Ascending aorta (tissue), 2 donors: ENCODE measurements at regions of chr12 and their contacts with region 1.

Region 1: DNA sequence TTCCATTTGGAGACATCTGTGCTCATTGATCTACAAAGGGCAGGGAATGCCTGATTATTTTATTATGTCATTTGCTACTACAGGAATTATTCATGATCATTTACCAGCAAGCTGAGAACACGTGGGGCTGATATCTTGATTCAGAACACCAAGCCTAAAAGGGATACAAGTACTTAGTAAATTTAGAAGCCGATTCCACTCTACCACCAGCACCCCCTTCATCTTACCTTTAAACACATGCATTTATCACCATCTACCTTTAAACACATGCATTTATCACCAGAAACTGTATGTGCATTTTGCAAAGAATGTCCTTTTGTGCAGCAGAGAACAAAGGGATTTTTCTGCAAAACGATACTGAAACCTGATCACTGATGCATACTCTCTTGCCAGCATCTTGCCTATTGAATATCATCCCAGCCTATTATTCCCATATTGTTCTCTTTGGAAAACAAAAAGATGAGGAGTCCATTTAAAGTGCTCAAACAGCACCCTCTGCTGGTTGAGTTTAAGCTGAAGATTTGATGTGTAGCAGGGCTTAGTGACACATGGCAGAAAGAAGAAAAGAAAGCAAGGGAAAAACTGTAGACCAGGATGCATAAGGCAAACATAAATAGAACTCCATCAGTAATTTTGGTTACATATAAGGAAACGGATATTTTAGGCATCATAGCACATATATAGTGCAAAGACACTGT is 132.6 kb upstream of the PLEKHG7 start:
- DNase-seq: peak in 1 of 2 donors; percentile 82
- H3K4me3 ChIP-seq: no peak overlapping the region
- H3K27ac ChIP-seq: no peak overlapping the region
- H3K4me1 ChIP-seq: no peaks in the 10 kb centered on the region
- H3K27me3 ChIP-seq: no peaks in the 10 kb centered on the region
- CTCF ChIP-seq: peak; percentile 51 to 87 (median 71)

Region 2: DNA sequence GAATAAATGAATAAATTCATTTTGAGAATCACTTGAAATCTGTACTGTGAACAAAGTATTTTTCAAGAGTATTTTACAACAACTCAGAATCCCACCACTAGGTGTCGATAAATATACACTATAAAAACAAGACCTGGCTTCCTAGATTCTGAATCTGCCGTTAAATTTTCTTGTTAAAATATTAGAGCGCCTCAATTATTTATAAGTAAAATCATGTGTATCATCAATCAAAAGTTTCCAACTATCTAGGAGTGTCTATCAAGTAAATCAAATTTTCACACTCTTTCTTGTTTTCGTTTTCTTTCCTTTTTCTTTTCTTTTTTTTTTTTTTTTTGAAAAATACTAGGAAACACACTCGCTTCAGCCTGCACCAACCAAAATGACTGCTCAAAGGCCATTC is 1208.3 kb before region 1 on chr12:
- intact Hi-C with region 1: loop called (anchors 5 kb)
- DNase-seq: no peak
- H3K4me3 ChIP-seq: no peak overlapping the region
- H3K27ac ChIP-seq: no peak overlapping the region
- H3K4me1 ChIP-seq: no peaks in the 10 kb centered on the region
- H3K27me3 ChIP-seq: no peaks in the 10 kb centered on the region
- CTCF ChIP-seq: peak; percentile 41 to 69 (median 45)

Region 3: DNA sequence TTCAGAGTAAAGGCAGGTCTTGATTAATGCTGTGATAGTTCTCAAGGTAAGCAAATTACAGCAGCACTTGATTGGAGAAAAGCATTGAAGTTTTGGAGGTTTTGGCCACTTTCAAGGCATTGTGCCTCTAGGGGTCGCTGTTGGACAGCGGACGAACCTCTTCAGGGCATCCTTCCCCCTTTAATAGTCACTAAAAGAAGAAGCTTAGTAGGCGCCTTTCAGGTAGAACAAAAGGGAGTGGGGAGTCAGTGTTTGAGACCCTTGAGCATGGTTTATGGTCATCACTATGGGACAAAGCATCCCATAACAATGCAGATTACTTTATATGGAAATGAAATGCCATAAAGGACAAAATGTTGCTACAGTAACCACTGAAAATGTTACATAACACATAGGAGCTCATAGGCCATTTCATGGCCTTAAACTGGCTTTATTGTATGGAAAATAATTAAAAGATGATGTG is 1188.1 kb before region 1 on chr12:
- intact Hi-C with region 1: loop called (anchors 1 kb)
- DNase-seq: peak in 1 of 2 donors; percentile 92
- H3K4me3 ChIP-seq: peak overlapping the region; percentile 55 to 61
- H3K27ac ChIP-seq: peak overlapping the region in 1 of 2 donors; percentile 1
- H3K4me1 ChIP-seq: no peaks in the 10 kb centered on the region
- H3K27me3 ChIP-seq: no peaks in the 10 kb centered on the region
- CTCF ChIP-seq: peak; percentile 75 to 89 (median 84)

Region 4: GRCh38 chr12:91577586-91578539 is 992.3 kb before region 1 on chr12:
- intact Hi-C with region 1: loop called (anchors 5 kb)
- DNase-seq: no peak
- H3K4me3 ChIP-seq: peak overlapping the region; percentile 19 to 35
- H3K27ac ChIP-seq: no peak overlapping the region
- H3K4me1 ChIP-seq: no peaks in the 10 kb centered on the region
- H3K27me3 ChIP-seq: no peaks in the 10 kb centered on the region
- CTCF ChIP-seq: peak; percentile 29 to 66 (median 65)

Region 5: DNA sequence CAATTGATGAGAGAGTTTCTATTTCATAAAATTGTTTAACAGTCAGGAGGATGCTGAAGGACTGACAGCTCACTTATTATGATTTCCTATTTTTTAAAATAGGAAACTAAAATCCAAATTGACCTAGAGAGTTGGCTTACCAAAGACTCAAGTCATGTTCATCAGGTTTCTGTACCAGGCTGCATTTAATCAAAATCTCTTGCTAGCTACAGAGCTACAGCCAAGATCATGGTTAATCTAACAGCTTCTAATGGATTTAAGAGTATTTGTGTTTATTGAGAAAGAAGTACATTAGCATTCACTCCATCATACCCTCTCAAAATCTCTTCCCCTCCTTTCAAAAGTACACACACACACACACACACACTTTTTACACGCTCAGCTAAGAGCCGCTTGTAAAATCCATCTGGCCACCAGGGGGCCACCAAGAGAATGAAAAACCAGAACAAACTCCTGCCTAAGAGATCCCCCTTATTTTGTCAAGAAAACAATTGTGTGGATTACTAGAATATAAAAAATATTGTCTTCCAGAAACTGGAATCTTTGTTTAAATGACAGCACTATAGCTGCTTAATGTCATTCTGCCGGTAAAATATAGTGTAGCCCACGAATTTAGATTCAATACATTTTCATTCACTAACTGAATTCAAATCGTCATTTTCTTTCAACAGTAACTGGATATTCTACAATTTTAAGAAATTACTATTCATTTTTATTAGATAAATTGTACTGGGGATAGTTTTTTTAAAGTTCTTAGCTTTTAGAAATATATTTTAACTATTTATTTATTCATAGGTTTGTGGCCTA is 758.5 kb before region 1 on chr12:
- intact Hi-C with region 1: loop called (anchors 2 kb)
- DNase-seq: peak in 1 of 2 donors; percentile 85
- H3K4me3 ChIP-seq: no peak overlapping the region
- H3K27ac ChIP-seq: no peak overlapping the region
- H3K4me1 ChIP-seq: no peaks in the 10 kb centered on the region
- H3K27me3 ChIP-seq: no peaks in the 10 kb centered on the region
- CTCF ChIP-seq: peak; percentile 60 to 81 (median 63)

Region 6: GRCh38 chr12:92696216-92696615 is 126.0 kb after region 1 on chr12:
- intact Hi-C with region 1: no loop called
- DNase-seq: no peak
- H3K4me3 ChIP-seq: no peak overlapping the region
- H3K27ac ChIP-seq: no peak overlapping the region
- H3K4me1 ChIP-seq: no peaks in the 10 kb centered on the region
- H3K27me3 ChIP-seq: no peaks in the 10 kb centered on the region
- CTCF ChIP-seq: no peak